CD8-positive, alpha-beta memory T cell (primary cell): ENCODE measurements at regions of chr2 and their contacts with region 1.

Region 1: GRCh38 chr2:38535744-38536506 is 66.8 kb downstream of the HNRNPLL start:
- DNase-seq: peak; percentile 62 to 82 (median 68)
- H3K4me3 ChIP-seq: peak overlapping the region; percentile 41
- H3K4me3 Mint-ChIP-seq: peak overlapping the region in 5 of 7 donors; percentile 45 to 69 (median 59)
- H3K27ac ChIP-seq: no peak overlapping the region
- H3K27ac Mint-ChIP-seq: no peak overlapping the region
- H3K4me1 ChIP-seq: no peaks in the 10 kb centered on the region
- H3K4me1 Mint-ChIP-seq: peaks cover 3 to 8% (median 3%) of the 10 kb centered on the region in 3 donors
- H3K27me3 ChIP-seq: no peaks in the 10 kb centered on the region
- H3K27me3 Mint-ChIP-seq: peaks cover 9 to 12% of the 10 kb centered on the region in 2 donors

Region 2: DNA sequence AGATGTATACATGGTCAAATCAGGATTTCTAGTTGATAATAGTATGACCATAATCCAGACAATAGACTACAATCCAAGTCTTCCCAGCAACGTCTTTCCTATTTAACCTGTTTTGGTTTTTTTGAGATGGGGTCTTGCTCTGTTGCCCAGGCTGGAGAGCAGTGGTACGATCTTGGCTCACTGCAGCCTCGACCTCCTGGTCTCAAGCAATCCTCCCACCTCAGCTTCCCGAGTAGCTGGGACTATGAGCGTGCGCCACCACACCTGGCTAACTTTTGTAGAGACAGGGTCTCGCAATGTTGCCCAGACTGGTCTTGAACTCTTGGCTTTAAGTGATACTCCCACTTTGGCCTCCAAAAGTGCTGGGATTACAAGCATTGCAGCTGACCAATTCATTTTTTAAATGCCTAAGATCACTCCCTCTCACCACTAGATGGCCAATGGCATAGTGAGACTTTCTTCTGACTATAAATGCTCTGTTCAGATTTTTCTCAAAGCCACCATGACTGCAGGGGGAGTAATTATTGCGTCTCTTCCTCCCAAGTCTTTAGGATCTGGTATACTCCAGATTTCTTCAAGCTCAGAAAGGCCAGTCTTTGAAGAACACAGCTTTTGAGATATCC is 19.2 kb after region 1 on chr2:
- CTCF ChIA-PET with region 1: interaction called, 13 read pairs
- POLR2A ChIA-PET with region 1: interaction called, 6 read pairs
- DNase-seq: no peak
- H3K4me3 ChIP-seq: no peak overlapping the region
- H3K4me3 Mint-ChIP-seq: no peak overlapping the region
- H3K27ac ChIP-seq: no peak overlapping the region
- H3K27ac Mint-ChIP-seq: peak overlapping the region in 1 of 8 donors; percentile 77
- H3K4me1 ChIP-seq: no peaks in the 10 kb centered on the region
- H3K4me1 Mint-ChIP-seq: peaks cover 4 to 12% (median 11%) of the 10 kb centered on the region in 3 donors
- H3K27me3 ChIP-seq: no peaks in the 10 kb centered on the region
- H3K27me3 Mint-ChIP-seq: peaks cover 0 to 1% of the 10 kb centered on the region in 2 donors

Region 3: DNA sequence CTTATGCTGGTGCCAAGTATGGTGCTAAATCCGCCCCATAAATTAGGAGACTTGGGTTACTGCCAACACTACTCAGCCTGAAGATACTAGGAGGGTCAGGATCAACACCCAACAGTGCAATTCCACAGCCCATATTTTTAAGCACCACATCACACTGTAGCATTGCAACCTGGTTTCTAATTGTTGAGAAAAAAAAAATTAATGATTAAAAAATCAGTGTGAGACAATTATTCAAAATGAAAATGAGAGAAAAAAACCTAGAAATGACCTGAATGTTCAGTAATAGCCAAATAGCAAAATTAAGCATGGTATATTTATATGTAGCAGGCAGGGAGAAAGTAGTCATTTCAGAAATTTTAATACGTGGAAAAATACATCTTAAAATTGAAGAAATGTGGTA is 96.1 kb after region 1 on chr2:
- CTCF ChIA-PET with region 1: no interaction called
- POLR2A ChIA-PET with region 1: no interaction called
- DNase-seq: no peak
- H3K4me3 ChIP-seq: no peak overlapping the region
- H3K4me3 Mint-ChIP-seq: no peak overlapping the region
- H3K27ac ChIP-seq: no peak overlapping the region
- H3K27ac Mint-ChIP-seq: no peak overlapping the region
- H3K4me1 ChIP-seq: no peaks in the 10 kb centered on the region
- H3K4me1 Mint-ChIP-seq: peaks cover 12 to 20% (median 19%) of the 10 kb centered on the region in 3 donors
- H3K27me3 ChIP-seq: no peaks in the 10 kb centered on the region
- H3K27me3 Mint-ChIP-seq: no peaks in the 10 kb centered on the region

Region 4: GRCh38 chr2:38740851-38741731 is 205.2 kb after region 1 on chr2:
- CTCF ChIA-PET with region 1: interaction called, 19 read pairs
- POLR2A ChIA-PET with region 1: interaction called, 5 read pairs
- DNase-seq: peak in 3 of 5 donors; percentile 49 to 62 (median 54)
- H3K4me3 ChIP-seq: no peak overlapping the region
- H3K4me3 Mint-ChIP-seq: peak overlapping the region in 5 of 7 donors; percentile 12 to 68 (median 47)
- H3K27ac ChIP-seq: no peak overlapping the region
- H3K27ac Mint-ChIP-seq: peak overlapping the region; percentile 18 to 99 (median 82)
- H3K4me1 ChIP-seq: peaks cover 26% of the 10 kb centered on the region
- H3K4me1 Mint-ChIP-seq: peaks cover 47 to 70% (median 69%) of the 10 kb centered on the region in 3 donors
- H3K27me3 ChIP-seq: no peaks in the 10 kb centered on the region
- H3K27me3 Mint-ChIP-seq: no peaks in the 10 kb centered on the region

Region 5: GRCh38 chr2:38866773-38867444 is 331.0 kb after region 1 on chr2:
- CTCF ChIA-PET with region 1: no interaction called
- POLR2A ChIA-PET with region 1: no interaction called
- DNase-seq: no peak
- H3K4me3 ChIP-seq: no peak overlapping the region
- H3K4me3 Mint-ChIP-seq: no peak overlapping the region
- H3K27ac ChIP-seq: no peak overlapping the region
- H3K27ac Mint-ChIP-seq: peak overlapping the region in 1 of 8 donors; percentile 4
- H3K4me1 ChIP-seq: no peaks in the 10 kb centered on the region
- H3K4me1 Mint-ChIP-seq: peaks cover 4 to 16% (median 8%) of the 10 kb centered on the region in 3 donors
- H3K27me3 ChIP-seq: no peaks in the 10 kb centered on the region
- H3K27me3 Mint-ChIP-seq: no peaks in the 10 kb centered on the region